K562 (cell line): ENCODE measurements at regions of chr14 and their contacts with region 1.

Region 1: DNA sequence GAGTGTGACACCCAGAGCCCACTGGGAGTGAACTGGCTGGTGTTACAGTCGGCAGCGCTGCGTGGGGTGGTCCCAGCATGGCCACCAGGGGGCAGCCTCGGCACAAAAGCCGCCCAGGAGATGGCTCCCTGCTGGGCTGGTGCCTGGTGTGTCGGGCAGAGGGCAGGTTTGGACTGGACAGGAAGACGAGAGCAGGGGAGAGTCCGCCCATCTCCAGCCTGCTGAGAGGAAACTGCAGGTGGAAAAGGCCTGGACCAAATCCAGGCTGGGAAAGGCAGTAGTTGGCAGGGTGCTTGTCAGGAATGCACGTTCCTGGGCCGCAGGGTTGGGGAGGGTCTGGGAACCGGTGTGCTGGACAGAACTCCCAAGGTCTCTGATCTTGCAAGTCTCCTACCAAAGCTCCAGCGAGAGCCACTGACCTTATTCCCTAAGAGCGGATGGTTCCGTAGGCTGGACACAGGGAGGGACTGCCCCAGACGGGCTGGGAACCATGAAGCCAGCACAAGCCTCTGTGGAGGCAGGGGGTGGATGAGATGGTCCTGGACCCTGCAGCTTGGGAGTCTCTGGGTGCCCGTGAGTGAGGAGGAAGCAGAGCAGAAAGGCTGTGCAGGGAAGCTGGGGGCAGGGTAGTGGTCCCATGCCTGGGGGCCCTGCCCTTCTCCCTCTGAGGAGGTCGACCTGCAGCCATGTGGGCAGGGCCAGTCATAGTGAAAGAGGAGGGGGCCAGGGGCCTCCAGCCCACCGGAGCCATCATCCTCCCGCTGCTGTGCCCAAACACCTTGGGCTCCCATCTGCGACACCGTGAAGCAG is 1.8 kb downstream of the AHNAK2 start:
- DNase-seq: peak; percentile 62 to 83 (median 68)
- ATAC-seq: peak; percentile 87
- H3K4me3 ChIP-seq: no peak overlapping the region
- H3K27ac ChIP-seq: no peak overlapping the region
- H3K4me1 ChIP-seq: peaks cover 7 to 80% of the 10 kb centered on the region in 2 experiments; a peak in 4 of 5 replicates
- H3K27me3 ChIP-seq: no peaks in the 10 kb centered on the region
- CTCF ChIP-seq: peak; percentile 78 to 98 (median 93)
- EP300 ChIP-seq: no peak
- POLR2A ChIP-seq: no peak
- RAD21 ChIP-seq: peak; percentile 89 to 97

Region 2: GRCh38 chr14:105020815-105021655 is 44.6 kb after region 1 on chr14 and contains the start of gene CDCA4:
- CTCF ChIA-PET with region 1: interaction called, 4 read pairs
- POLR2A ChIA-PET with region 1: interaction called, 7 read pairs
- in situ Hi-C with region 1: no loop called
- intact Hi-C with region 1: loop called (anchors 5 kb)
- DNase-seq: peak; percentile 95 to 97 (median 97)
- ATAC-seq: peak; percentile 87
- H3K4me3 ChIP-seq: peak within 1 kb of the TSS; percentile 83
- H3K27ac ChIP-seq: peak within 1 kb of the TSS; percentile 96
- H3K4me1 ChIP-seq: peaks cover 25 to 36% of the 10 kb centered on the region in 2 experiments
- H3K27me3 ChIP-seq: no peaks in the 10 kb centered on the region
- CTCF ChIP-seq: no peak
- EP300 ChIP-seq: peak; percentile 19; the same call in 1 of the 2 replicates
- POLR2A ChIP-seq: peak; percentile 72
- RAD21 ChIP-seq: no peak
- polyA plus RNA-seq, gene CDCA4: 6.6 to 10.3 TPM